Activated CD4-positive, alpha-beta T cell treated with anti-CD3 and anti-CD28 coated beads for 36 hours (primary cell): ENCODE measurements at regions of chr21 and their contacts with region 1.

Region 1: GRCh38 chr21:42392721-42393442 is 3.0 kb downstream of the TMPRSS3 start:
- DNase-seq: peak; percentile 69
- ATAC-seq: peak; percentile 94
- H3K4me3 Mint-ChIP-seq: peak overlapping the region; percentile 62
- H3K27ac Mint-ChIP-seq: peak overlapping the region; percentile 89
- H3K4me1 Mint-ChIP-seq: peaks cover 84% of the 10 kb centered on the region
- H3K27me3 Mint-ChIP-seq: no peaks in the 10 kb centered on the region

Region 2: GRCh38 chr21:42027822-42028765 is 364.8 kb before region 1 on chr21:
- CTCF ChIA-PET with region 1: no interaction called
- POLR2A ChIA-PET with region 1: no interaction called
- intact Hi-C with region 1: no loop called
- DNase-seq: no peak
- ATAC-seq: no peak
- H3K4me3 Mint-ChIP-seq: no peak overlapping the region
- H3K27ac Mint-ChIP-seq: no peak overlapping the region
- H3K4me1 Mint-ChIP-seq: no peaks in the 10 kb centered on the region
- H3K27me3 Mint-ChIP-seq: peaks cover 3% of the 10 kb centered on the region

Region 3: DNA sequence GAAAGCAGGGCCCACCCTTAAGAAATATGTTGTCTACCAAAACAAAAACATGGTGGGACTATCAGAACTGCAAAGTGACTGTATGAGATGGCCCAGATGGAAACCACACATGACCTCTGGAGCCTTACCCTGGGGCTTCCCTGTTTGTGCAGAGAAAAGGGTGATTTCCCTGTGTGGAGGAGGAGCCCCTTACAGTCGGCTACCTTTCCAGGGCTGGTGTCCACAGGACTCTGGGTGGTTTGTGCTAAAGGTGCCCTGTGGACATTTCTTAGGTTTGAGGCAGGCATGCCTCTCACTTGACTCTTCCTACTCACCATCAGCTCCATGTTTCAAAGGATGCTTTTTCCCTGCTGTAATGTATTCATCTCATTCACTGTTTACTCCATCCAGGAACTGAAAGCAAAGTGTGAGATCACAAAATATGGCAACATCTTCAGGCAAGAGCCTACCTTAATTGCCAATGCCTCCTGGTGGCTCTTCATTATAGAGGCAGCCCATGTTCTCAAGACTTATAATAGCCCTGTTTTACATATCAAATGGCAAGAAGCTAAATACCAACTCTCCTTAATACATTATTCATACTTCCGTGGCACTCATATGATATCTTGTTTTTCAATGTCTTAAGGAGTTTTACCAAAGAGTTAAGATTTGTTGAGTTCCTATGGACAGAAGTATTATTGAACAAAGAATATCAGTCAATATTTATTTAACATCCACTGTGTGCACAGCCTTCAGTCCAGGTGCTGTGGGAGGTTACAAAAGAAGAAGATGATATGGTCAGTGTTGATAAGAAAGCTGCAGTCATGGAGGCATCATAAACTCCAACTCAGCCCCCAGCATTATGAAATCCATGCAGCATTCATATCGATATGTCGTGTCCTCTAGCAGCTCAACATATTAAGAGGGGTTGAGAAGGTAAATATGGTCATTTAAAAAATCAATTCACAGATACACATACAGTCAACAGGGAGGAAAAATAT is 62.2 kb before region 1 on chr21:
- CTCF ChIA-PET with region 1: no interaction called
- POLR2A ChIA-PET with region 1: no interaction called
- intact Hi-C with region 1: no loop called
- DNase-seq: no peak
- ATAC-seq: no peak
- H3K4me3 Mint-ChIP-seq: no peak overlapping the region
- H3K27ac Mint-ChIP-seq: no peak overlapping the region
- H3K4me1 Mint-ChIP-seq: no peaks in the 10 kb centered on the region
- H3K27me3 Mint-ChIP-seq: no peaks in the 10 kb centered on the region

Region 4: GRCh38 chr21:42374864-42375492 is 17.9 kb before region 1 on chr21:
- CTCF ChIA-PET with region 1: interaction called, 8 read pairs
- POLR2A ChIA-PET with region 1: interaction called, 5 read pairs
- intact Hi-C with region 1: loop called in 1 of 2 experiments (anchors 2 kb)
- DNase-seq: peak; percentile 47
- ATAC-seq: peak; percentile 31
- H3K4me3 Mint-ChIP-seq: peak overlapping the region; percentile 57
- H3K27ac Mint-ChIP-seq: peak overlapping the region; percentile 92
- H3K4me1 Mint-ChIP-seq: peaks cover 50% of the 10 kb centered on the region
- H3K27me3 Mint-ChIP-seq: no peaks in the 10 kb centered on the region

Region 5: DNA sequence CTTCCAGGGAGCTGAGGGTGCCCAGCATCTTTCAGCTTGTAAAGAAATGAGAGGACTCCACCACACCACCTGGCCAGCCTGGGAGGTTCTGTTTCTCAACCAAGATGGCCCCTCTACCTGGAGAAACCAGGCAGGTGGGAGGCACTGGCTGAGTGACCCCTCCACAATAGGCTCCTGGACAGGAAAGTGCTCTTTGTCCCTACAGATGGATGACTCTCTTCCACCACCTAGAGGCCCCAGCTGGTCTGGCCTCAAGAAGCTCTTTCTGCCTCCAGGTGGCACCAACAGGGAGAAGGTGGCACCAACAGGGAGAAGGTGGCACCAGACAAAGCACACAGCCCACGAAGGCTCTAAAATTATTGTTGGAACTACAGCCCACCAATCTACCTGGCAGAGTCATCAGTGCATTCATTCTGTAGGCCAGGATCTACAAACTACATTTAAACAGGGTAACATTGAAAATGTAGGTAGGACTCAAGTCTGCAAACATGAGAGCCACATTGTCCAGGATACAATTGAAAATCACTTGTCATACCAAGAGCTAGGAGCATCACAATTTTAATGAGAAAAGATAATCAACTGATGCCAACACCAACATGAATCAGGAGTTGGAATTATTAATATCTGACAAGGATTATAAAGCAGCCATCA is 11.4 kb before region 1 on chr21:
- CTCF ChIA-PET with region 1: interaction called, 18 read pairs
- POLR2A ChIA-PET with region 1: no interaction called
- intact Hi-C with region 1: no loop called
- DNase-seq: peak; percentile 69
- ATAC-seq: peak; percentile 70
- H3K4me3 Mint-ChIP-seq: no peak overlapping the region
- H3K27ac Mint-ChIP-seq: no peak overlapping the region
- H3K4me1 Mint-ChIP-seq: peaks cover 16% of the 10 kb centered on the region
- H3K27me3 Mint-ChIP-seq: no peaks in the 10 kb centered on the region

Region 6: DNA sequence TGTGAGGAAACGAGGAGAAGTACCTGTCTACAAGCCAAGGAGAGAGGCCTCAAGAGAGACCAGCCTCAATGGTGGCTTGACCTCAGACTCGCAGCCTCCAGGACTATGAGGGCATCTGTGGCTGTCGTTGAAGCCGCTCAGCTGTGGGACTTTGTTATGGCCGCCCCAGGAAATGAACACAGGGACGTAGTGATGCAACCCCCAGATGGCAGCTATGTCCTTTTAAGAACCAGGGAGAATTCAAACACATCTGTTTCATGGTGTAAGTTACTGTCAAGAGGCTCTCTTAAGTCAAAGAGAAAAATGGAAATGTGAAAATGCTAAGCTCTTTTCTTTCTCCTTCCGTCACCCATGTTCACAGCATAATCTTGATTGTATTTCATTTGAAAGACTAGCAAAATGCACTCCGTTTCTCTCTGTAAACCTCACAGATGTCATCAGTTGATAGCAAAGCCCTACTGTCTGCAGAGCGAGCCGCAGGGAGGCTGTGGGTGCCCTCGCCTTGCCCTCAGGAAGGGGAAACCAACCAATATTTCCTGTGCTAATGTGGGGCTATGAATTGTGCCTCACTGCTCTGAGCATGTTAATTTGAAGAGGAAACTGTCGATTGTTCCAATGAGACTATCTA is 32.1 kb after region 1 on chr21:
- CTCF ChIA-PET with region 1: interaction called, 56 read pairs
- POLR2A ChIA-PET with region 1: interaction called, 12 read pairs
- intact Hi-C with region 1: loop called (anchors 1 to 5 kb)
- DNase-seq: peak; percentile 78
- ATAC-seq: peak; percentile 55
- H3K4me3 Mint-ChIP-seq: peak overlapping the region; percentile 64
- H3K27ac Mint-ChIP-seq: peak overlapping the region; percentile 87
- H3K4me1 Mint-ChIP-seq: peaks cover 74% of the 10 kb centered on the region
- H3K27me3 Mint-ChIP-seq: no peaks in the 10 kb centered on the region